ENCODE measurements at regions of chr1 and their contacts with region 1.

Region 1: GRCh38 chr1:224329842-224330753 is at the start of gene NVL:
- DNase-seq: peak; percentile 86
- ATAC-seq: peak; percentile 96
- H3K4me3 ChIP-seq: peak within 1 kb of the TSS; percentile 70
- H3K27ac ChIP-seq: peak within 1 kb of the TSS; percentile 95
- H3K4me1 ChIP-seq: no peaks in the 10 kb centered on the region; the same call in 1 of the 2 replicates
- H3K27me3 ChIP-seq: no peaks in the 10 kb centered on the region
- CTCF ChIP-seq: no peak
- POLR2A ChIP-seq: peak; percentile 58
- RAD21 ChIP-seq: no peak
- total RNA-seq, gene NVL: 16.5 and 18.9 TPM in 2 replicates

Region 2: GRCh38 chr1:224113918-224114786 is 215.9 kb before region 1 on chr1 and contains the start of gene FBXO28:
- CTCF ChIA-PET with region 1: interaction called, 10 read pairs
- POLR2A ChIA-PET with region 1: no interaction called
- dilution Hi-C with region 1: no loop called
- in situ Hi-C with region 1: loop called (anchors 5 kb)
- intact Hi-C with region 1: loop called (anchors 1 kb)
- DNase-seq: peak; percentile 95
- ATAC-seq: peak; percentile 98
- H3K4me3 ChIP-seq: peak within 1 kb of the TSS; percentile 75
- H3K27ac ChIP-seq: peak within 1 kb of the TSS; percentile 72
- H3K4me1 ChIP-seq: no peaks in the 10 kb centered on the region
- H3K27me3 ChIP-seq: no peaks in the 10 kb centered on the region
- CTCF ChIP-seq: no peak
- POLR2A ChIP-seq: peak; percentile 90
- RAD21 ChIP-seq: no peak
- total RNA-seq, gene FBXO28: 22.6 and 30.0 TPM in 2 replicates

Region 3: GRCh38 chr1:224170365-224171112 is 159.6 kb before region 1 on chr1:
- CTCF ChIA-PET with region 1: no interaction called
- POLR2A ChIA-PET with region 1: no interaction called
- dilution Hi-C with region 1: no loop called
- in situ Hi-C with region 1: no loop called
- intact Hi-C with region 1: loop called (anchors 5 kb)
- DNase-seq: no peak
- ATAC-seq: no peak
- H3K4me3 ChIP-seq: no peak overlapping the region
- H3K27ac ChIP-seq: no peak overlapping the region
- H3K4me1 ChIP-seq: no peaks in the 10 kb centered on the region
- H3K27me3 ChIP-seq: no peaks in the 10 kb centered on the region
- CTCF ChIP-seq: peak; percentile 31; the same call in 1 of the 2 replicates
- POLR2A ChIP-seq: no peak
- RAD21 ChIP-seq: peak; percentile 38

Measured in IMR-90 (cell line).